Left cardiac atrium (tissue), 4 donors: ENCODE measurements at regions of chr18 and their contacts with region 1.

Region 1: GRCh38 chr18:8988261-8988871 is 114.1 kb upstream of the NDUFV2 start:
- DNase-seq: peak; percentile 38
- ATAC-seq: peak; percentile 81 to 87

Region 2: GRCh38 chr18:8478166-8478967 is 510.0 kb before region 1 on chr18:
- intact Hi-C with region 1: loop called in 1 of 2 experiments (anchors 5 kb)
- DNase-seq: peak; percentile 40
- ATAC-seq: peak; percentile 53 to 71

Region 3: DNA sequence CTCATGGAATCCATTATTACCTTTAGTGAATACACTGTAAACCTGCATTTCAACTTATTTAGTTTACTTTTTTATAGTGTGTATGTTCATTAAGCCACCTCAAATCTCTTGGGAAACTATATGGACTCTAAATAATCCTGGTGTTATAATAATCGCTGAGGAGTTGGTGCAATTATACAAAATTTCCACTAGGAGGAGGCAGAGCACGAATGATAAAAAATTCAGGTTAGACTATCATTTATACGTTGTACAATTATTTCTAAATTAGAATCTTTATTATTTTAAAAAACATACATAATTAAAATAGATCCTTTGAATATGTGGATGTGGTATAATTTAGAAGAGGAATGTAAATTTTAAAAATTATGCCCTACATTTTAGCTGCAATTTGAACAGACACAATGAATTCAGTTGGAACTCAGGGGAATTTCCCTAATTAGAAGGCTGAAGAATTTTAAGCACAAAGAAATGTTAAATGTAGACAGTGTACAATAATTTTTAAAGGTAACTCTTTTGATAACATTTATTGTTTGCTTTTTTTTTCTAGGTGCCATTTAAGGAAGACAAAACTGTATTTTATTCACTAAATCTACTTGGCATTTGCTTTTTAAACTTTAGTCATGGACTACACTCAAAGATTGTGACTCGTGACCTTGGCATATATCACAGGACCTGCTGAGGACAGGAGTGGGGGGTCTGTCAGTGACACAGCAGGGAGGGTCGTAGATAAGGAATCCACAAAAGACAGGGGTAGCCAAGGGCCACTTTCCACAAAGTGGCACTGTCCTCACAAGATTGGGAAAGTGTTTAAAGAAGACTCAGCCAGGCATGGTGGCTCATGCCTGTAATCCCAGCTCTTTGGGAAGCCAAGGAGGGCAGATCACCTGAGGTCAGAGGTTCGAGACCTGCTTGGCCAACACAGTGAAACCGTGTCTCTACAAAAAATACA is 333.6 kb before region 1 on chr18:
- intact Hi-C with region 1: loop called (anchors 2 to 5 kb)
- DNase-seq: no peak
- ATAC-seq: no peak

Region 4: DNA sequence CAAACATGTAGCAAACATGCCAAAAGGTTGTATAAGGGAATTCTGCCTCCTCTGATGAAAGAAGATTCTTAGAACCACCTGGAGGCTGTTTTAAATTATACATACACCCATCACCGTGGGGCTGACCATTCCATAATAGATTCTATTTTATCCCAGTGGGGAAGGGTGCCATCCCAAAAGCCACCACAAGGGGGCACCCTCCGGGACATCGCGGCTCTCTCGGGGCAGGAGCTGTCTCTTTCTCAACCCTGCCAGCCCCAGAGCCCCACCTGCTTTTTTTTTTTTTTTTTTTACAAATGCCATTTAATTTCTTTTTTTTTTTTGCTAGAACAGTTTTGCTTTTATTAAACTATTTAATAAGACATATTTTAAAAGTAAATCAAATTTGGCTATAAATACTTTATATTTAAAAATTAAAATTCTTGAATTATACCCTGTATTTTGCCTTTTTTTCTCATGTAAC is 291.6 kb before region 1 on chr18:
- intact Hi-C with region 1: loop called (anchors 1 to 10 kb)
- DNase-seq: peak; percentile 75
- ATAC-seq: peak; percentile 76 to 93

Region 5: DNA sequence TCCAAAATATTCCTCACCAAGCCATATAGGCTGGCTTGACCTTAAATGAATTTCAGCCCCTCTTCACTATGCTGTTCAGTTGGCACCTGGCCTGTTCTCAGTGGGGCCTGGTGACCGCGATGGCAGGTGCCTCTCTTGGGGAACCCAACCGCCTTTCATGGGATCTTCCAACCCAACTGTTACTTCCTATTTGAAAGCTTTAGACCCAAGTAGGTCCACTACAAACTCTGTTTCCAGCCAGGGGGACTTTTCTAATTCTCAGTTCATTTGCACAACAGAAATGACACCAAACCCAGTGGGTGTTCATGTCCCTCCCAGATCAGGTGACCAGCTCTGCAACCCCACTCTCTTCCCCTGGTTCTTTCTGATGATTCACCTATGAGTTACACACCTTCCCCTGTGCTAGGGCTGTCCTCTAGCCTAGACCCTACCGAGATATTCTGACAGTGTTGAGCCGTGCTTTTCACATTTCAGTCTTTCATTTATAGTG is 78.5 kb after region 1 on chr18:
- intact Hi-C with region 1: no loop called
- DNase-seq: no peak
- ATAC-seq: no peak